CD8-positive, alpha-beta T cell (primary cell): ENCODE measurements at regions of chr19 and their contacts with region 1.

Region 1: GRCh38 chr19:41263850-41264580 is at the start of gene HNRNPUL1:
- DNase-seq: peak; percentile 98 to 100 (median 100)
- ATAC-seq: peak; percentile 62
- H3K4me3 ChIP-seq: peak within 1 kb of the TSS; percentile 71 to 87
- H3K4me3 Mint-ChIP-seq: peak within 1 kb of the TSS; percentile 94
- H3K27ac ChIP-seq: peak within 1 kb of the TSS; percentile 97 to 98
- H3K27ac Mint-ChIP-seq: peak within 1 kb of the TSS; percentile 100
- H3K4me1 ChIP-seq: peaks cover 36% of the 10 kb centered on the region
- H3K4me1 Mint-ChIP-seq: peaks cover 43% of the 10 kb centered on the region
- H3K27me3 ChIP-seq: no peaks in the 10 kb centered on the region
- H3K27me3 Mint-ChIP-seq: no peaks in the 10 kb centered on the region
- CTCF ChIP-seq: no peak
- total RNA-seq, gene HNRNPUL1: 416 to 448 TPM

Region 2: GRCh38 chr19:39996811-39997594 is 1267.0 kb before region 1 on chr19 and contains the start of gene ZNF546:
- CTCF ChIA-PET with region 1: no interaction called
- POLR2A ChIA-PET with region 1: no interaction called
- intact Hi-C with region 1: loop called in 1 of 2 experiments (anchors 10 kb)
- DNase-seq: peak; percentile 70 to 94 (median 90)
- ATAC-seq: peak; percentile 88
- H3K4me3 ChIP-seq: peak within 1 kb of the TSS; percentile 80 to 85
- H3K4me3 Mint-ChIP-seq: peak within 1 kb of the TSS; percentile 90
- H3K27ac ChIP-seq: peak within 1 kb of the TSS; percentile 77 to 88
- H3K27ac Mint-ChIP-seq: peak within 1 kb of the TSS; percentile 92
- H3K4me1 ChIP-seq: peaks cover 15% of the 10 kb centered on the region
- H3K4me1 Mint-ChIP-seq: peaks cover 41% of the 10 kb centered on the region
- H3K27me3 ChIP-seq: no peaks in the 10 kb centered on the region
- H3K27me3 Mint-ChIP-seq: no peaks in the 10 kb centered on the region
- CTCF ChIP-seq: no peak
- total RNA-seq, gene ZNF546: 1.6 to 2.4 TPM

Region 3: GRCh38 chr19:40609561-40610395 is 654.2 kb before region 1 on chr19:
- CTCF ChIA-PET with region 1: no interaction called
- POLR2A ChIA-PET with region 1: no interaction called
- intact Hi-C with region 1: loop called in 1 of 2 experiments (anchors 5 kb)
- DNase-seq: peak; percentile 71 to 90 (median 84)
- ATAC-seq: peak; percentile 35
- H3K4me3 ChIP-seq: peak overlapping the region; percentile 50 to 56
- H3K4me3 Mint-ChIP-seq: peak overlapping the region; percentile 78
- H3K27ac ChIP-seq: peak overlapping the region; percentile 72 to 89
- H3K27ac Mint-ChIP-seq: peak overlapping the region; percentile 94
- H3K4me1 ChIP-seq: peaks cover 44% of the 10 kb centered on the region
- H3K4me1 Mint-ChIP-seq: peaks cover 68% of the 10 kb centered on the region
- H3K27me3 ChIP-seq: no peaks in the 10 kb centered on the region
- H3K27me3 Mint-ChIP-seq: no peaks in the 10 kb centered on the region
- CTCF ChIP-seq: no peak

Region 4: DNA sequence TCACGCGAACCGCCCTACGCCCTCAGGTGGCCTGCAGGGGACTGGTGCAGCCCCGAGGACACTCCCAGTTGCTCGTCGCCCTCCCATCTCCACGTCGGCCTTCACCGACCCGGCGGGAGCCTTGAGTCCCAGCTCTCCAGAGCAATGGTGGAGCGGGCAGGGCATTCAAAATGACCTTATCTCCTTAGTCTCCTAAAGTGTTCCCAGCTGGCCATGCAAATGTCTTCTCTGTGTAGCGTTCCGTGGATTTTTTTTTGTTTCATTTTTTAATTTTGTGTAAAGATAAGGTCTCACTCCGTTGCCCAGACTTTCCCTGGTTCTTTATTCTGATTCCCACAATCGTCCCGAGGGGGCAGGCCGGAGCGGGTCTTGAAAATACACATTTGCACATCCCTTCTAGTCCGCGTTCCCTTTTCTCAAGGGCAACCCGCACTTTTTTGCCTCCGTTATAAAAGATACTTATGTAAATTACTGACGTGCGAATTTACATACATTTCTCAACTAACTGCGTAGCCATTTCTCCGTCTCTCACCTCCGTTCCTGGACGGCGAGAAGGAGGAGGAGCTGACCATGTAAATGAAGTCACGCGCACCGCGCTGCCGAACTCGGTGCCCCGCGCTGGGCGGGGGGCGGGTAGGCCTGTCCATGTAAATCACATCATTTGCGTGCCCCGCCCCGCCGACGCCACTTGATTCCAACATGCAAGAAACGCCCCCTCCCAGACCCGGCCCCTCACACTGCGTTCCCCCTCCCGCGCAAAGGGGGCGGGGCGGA is 465.6 kb before region 1 on chr19:
- CTCF ChIA-PET with region 1: no interaction called
- POLR2A ChIA-PET with region 1: interaction called, 6 read pairs
- intact Hi-C with region 1: loop called (anchors 2 to 5 kb)
- DNase-seq: peak; percentile 100
- ATAC-seq: peak; percentile 82
- H3K4me3 ChIP-seq: peak overlapping the region; percentile 60 to 91
- H3K4me3 Mint-ChIP-seq: peak overlapping the region; percentile 98
- H3K27ac ChIP-seq: peak overlapping the region; percentile 97
- H3K27ac Mint-ChIP-seq: peak overlapping the region; percentile 97
- H3K4me1 ChIP-seq: peaks cover 45% of the 10 kb centered on the region
- H3K4me1 Mint-ChIP-seq: peaks cover 50% of the 10 kb centered on the region
- H3K27me3 ChIP-seq: no peaks in the 10 kb centered on the region
- H3K27me3 Mint-ChIP-seq: no peaks in the 10 kb centered on the region
- CTCF ChIP-seq: peak; percentile 56

Region 5: DNA sequence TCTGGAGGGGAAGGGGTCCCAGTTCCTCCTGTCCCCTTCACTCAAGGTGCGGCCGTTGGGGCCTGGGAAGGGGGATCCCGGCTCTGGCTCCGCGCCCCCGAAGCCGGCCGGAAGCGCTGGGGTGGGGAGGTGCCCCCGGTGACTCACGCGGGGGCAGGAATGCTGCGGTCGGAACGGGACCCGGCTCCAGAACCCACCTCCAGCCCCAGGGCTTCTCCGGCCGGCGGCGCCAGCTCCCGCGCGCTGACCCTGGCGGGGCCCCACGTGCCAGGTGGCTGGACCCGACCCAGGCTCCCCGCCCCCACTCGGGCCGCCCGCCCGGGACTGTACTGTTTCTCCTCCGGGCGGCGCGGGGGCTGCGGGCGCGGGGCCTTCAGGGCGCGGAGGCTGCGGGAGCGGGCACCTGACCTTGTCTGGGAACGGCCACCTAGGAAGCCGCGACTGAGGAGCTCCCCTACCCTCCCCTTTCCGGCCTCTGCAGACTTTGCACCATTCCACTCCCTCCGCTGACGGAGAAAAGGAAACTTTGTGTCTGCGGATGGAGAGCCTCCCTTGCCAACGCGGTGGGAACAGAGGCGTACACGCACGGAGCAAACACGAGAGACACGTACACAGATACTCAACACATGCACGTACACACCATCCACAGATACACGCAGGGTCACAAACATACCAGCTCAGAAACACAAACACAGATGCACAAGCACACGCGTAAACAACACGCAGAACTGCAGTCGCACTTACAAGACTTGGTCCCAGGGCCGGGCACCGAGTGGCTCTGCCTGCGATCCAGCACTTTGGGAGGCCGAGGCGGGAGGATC is 37.8 kb before region 1 on chr19:
- CTCF ChIA-PET with region 1: interaction called, 5 read pairs
- POLR2A ChIA-PET with region 1: interaction called, 12 read pairs
- intact Hi-C with region 1: loop called in 1 of 2 experiments (anchors 2 kb)
- DNase-seq: peak in 8 of 9 experiments; percentile 13 to 63 (median 45)
- ATAC-seq: peak; percentile 51
- H3K4me3 ChIP-seq: peak overlapping the region; percentile 41
- H3K4me3 Mint-ChIP-seq: peak overlapping the region; percentile 88
- H3K27ac ChIP-seq: no peak overlapping the region
- H3K27ac Mint-ChIP-seq: peak overlapping the region; percentile 83
- H3K4me1 ChIP-seq: peaks cover 9% of the 10 kb centered on the region
- H3K4me1 Mint-ChIP-seq: peaks cover 17% of the 10 kb centered on the region
- H3K27me3 ChIP-seq: peaks cover 0 to 13% of the 10 kb centered on the region in 2 experiments
- H3K27me3 Mint-ChIP-seq: peaks cover 24% of the 10 kb centered on the region
- CTCF ChIP-seq: no peak

Region 6: GRCh38 chr19:41353466-41354342 is 89.7 kb after region 1 on chr19 and contains the start of gene TGFB1:
- CTCF ChIA-PET with region 1: interaction called, 22 read pairs
- POLR2A ChIA-PET with region 1: interaction called, 40 read pairs
- intact Hi-C with region 1: loop called (anchors 1 kb)
- DNase-seq: peak; percentile 91 to 98 (median 96)
- ATAC-seq: peak; percentile 69
- H3K4me3 ChIP-seq: peak within 1 kb of the TSS; percentile 74 to 79
- H3K4me3 Mint-ChIP-seq: peak within 1 kb of the TSS; percentile 95
- H3K27ac ChIP-seq: peak within 1 kb of the TSS; percentile 76 to 82
- H3K27ac Mint-ChIP-seq: peak within 1 kb of the TSS; percentile 96
- H3K4me1 ChIP-seq: peaks cover 69% of the 10 kb centered on the region
- H3K4me1 Mint-ChIP-seq: peaks cover 60% of the 10 kb centered on the region
- H3K27me3 ChIP-seq: no peaks in the 10 kb centered on the region
- H3K27me3 Mint-ChIP-seq: no peaks in the 10 kb centered on the region
- CTCF ChIP-seq: peak; percentile 85
- total RNA-seq, gene TGFB1: 652 to 710 TPM